HEK293T (cell line): ENCODE measurements at regions of chr11 and their contacts with region 1.

Region 1: DNA sequence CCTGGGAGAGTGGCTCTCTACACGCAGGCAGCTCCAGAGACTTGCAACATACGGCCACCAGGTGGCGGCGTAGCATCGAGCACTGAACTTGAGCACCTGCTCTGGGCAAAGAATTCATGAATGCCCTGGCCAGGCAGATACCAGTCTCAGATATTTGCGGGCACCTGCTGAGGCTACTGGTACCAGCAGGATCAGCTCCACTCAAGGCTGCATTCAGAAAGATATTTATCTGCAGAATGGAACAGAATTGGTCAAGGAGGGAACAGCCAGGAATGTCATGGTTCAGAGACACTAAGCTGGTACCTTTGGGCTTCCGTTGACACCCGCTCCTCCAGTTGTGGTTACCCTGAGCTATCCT is 10.8 kb upstream of the CCDC86 start:
- DNase-seq: peak; percentile 81

Region 2: GRCh38 chr11:60871378-60872061 is 40.4 kb after region 1 on chr11:
- CTCF ChIA-PET with region 1: no interaction called
- POLR2A ChIA-PET with region 1: no interaction called
- DNase-seq: no peak

Region 3: DNA sequence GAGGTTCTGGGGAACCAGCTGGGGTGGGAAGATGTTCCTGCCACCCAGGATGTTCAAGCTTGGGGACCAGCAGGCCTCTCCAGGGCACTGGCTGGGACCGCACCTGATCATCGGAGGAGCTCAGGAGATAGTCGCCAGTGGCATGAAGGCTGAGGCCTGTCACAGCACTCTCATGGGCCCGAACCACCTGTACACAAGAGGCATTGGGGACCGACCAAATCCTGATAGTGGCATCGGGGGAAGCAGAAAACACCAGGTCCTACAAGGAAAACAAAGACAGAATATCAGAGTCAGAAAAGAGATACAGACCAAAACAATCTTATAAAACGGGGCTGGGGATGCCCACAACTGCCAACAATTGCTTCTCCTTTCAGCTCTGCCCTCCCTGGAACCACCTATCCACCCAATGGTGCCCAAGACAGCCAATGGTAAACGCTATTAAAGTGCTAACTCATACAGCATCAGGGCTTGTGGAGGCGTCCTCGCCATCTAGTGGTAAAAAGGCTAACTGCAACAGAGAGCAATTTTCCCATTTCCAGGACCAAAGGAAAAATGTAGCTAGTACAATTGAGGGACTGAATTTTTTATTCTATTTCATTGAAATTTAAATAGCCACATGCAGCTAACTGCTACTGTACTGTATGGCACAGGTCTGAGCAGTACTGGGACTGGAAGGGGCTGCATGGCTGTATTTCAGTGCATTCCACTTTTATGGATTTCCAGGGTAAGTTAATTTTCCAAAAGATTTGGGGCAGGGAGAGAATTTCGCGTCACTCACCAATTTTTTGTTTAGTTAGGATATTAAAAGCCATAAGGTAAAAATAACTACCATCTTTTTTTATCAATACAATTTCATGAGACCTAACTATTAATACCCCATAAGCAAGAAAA is 68.2 kb after region 1 on chr11:
- CTCF ChIA-PET with region 1: interaction called, 23 read pairs
- POLR2A ChIA-PET with region 1: no interaction called
- DNase-seq: peak; percentile 71